Heart left ventricle (tissue), 16 donors: ENCODE measurements at regions of chr14 and their contacts with region 1.

Region 1: GRCh38 chr14:71932220-71932981 is at the start of gene RGS6:
- DNase-seq: peak in 4 of 5 donors; percentile 27 to 63 (median 40)
- ATAC-seq: peak; percentile 39 to 93 (median 81)
- H3K4me3 ChIP-seq: peak within 1 kb of the TSS; percentile 55 to 79 (median 68)
- H3K27ac ChIP-seq: peak within 1 kb of the TSS in 11 of 12 donors; percentile 43 to 81 (median 70)
- H3K4me1 ChIP-seq: peaks cover 0 to 21% (median 4%) of the 10 kb centered on the region in 12 donors
- H3K27me3 ChIP-seq: peaks cover 0 to 53% (median 4%) of the 10 kb centered on the region in 9 donors
- CTCF ChIP-seq: peak in 9 of 12 donors; percentile 5 to 57 (median 35)
- POLR2A ChIP-seq: no peak
- total RNA-seq, gene RGS6: 9.5 to 25.4 (median 18.8) TPM

Region 2: GRCh38 chr14:71231521-71232393 is 700.6 kb before region 1 on chr14:
- intact Hi-C with region 1: no loop called
- DNase-seq: no peak
- ATAC-seq: no peak
- H3K4me3 ChIP-seq: no peak overlapping the region
- H3K27ac ChIP-seq: no peak overlapping the region
- H3K4me1 ChIP-seq: peaks cover 0 to 13% (median 5%) of the 10 kb centered on the region in 12 donors
- H3K27me3 ChIP-seq: no peaks in the 10 kb centered on the region
- CTCF ChIP-seq: no peak
- POLR2A ChIP-seq: no peak

Region 3: DNA sequence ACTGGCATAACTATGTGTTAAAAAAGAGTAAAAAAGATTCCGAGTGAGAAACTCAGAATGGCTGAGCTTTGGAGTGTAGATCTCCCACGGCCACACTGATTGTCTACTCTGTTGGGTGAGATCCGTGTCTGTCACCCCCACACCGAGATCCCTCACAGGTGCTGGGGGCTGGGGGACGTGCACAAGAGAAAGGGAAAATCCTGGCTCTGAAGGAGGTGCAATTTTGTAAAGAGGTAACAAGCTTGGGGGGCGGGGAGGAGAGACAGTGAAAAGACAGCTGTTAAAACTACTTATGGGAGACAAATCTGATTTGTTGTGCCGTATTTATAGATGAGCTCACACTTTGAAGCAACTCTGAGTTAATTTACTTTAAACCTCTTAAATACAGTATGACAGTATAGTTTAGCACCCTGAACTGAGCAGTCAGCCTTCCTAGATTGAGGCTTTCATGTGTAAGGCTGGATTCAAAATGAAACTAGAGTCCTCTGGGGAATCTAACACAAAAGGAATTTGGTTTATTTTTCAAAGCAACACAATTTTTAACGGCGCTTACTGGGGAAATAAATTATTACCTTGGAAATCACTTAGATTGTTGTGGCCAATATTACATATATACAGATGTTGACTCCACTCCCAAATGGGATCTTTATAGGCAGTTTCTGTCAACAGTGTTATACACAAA is 167.6 kb before region 1 on chr14:
- intact Hi-C with region 1: no loop called
- DNase-seq: no peak
- ATAC-seq: no peak
- H3K4me3 ChIP-seq: no peak overlapping the region
- H3K27ac ChIP-seq: no peak overlapping the region
- H3K4me1 ChIP-seq: peaks cover 0 to 3% (median 0%) of the 10 kb centered on the region in 12 donors
- H3K27me3 ChIP-seq: peaks cover 0 to 3% (median 0%) of the 10 kb centered on the region in 9 donors
- CTCF ChIP-seq: no peak
- POLR2A ChIP-seq: no peak

Region 4: DNA sequence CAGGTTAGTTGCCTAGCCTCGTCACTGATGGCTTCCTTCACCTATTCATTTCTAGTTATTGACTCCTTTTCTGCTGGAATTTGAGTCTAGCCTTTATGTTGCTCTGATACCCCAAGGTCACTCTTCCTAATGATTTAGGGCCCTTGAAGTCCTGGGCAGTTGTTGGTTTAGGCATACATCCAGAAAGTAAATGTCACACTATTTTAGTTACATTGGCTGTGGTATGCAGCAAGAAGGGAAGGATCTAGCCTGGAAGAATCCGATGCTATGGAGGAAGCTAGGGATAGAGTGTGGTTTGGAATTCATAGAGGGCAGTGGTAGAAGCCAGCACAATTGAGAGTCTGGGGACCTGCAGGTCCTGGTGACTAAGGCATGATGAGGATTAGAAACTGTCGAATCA is 37.9 kb after region 1 on chr14:
- intact Hi-C with region 1: loop called in 1 of 10 experiments (anchors 5 kb)
- DNase-seq: no peak
- ATAC-seq: peak in 2 of 4 donors; percentile 67 to 80
- H3K4me3 ChIP-seq: no peak overlapping the region
- H3K27ac ChIP-seq: peak overlapping the region in 9 of 12 donors; percentile 2 to 59 (median 23)
- H3K4me1 ChIP-seq: peaks cover 0 to 32% (median 8%) of the 10 kb centered on the region in 12 donors
- H3K27me3 ChIP-seq: no peaks in the 10 kb centered on the region
- CTCF ChIP-seq: no peak
- POLR2A ChIP-seq: no peak

Region 5: DNA sequence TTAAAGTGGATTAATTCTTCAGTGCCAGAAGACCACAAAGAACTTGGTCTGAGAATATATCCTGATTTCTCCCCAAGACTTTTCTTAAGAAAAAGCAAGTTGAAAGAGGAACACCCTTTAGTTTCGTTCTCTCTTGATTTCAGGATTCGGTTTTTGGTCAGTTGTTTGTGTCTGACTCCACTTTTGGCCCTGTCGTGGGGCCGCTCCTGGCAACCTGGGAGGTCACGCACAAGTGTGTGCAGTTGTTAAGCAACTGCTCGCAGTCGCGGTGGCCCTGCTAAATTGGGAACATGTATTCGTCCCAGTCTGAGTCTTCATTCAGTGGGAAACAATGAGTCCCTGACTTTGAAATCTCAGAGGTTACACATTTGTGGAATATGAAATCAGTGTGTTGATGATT is 68.5 kb after region 1 on chr14:
- intact Hi-C with region 1: loop called in 3 of 10 experiments (anchors 5 to 10 kb)
- DNase-seq: peak; percentile 35 to 84 (median 67)
- ATAC-seq: peak; percentile 79 to 95 (median 90)
- H3K4me3 ChIP-seq: peak overlapping the region in 2 of 12 donors; percentile 13 to 32
- H3K27ac ChIP-seq: peak overlapping the region in 9 of 12 donors; percentile 10 to 77 (median 57)
- H3K4me1 ChIP-seq: peaks cover 0 to 29% (median 5%) of the 10 kb centered on the region in 12 donors
- H3K27me3 ChIP-seq: no peaks in the 10 kb centered on the region
- CTCF ChIP-seq: no peak
- POLR2A ChIP-seq: no peak

Region 6: GRCh38 chr14:72154723-72155633 is 222.6 kb after region 1 on chr14:
- intact Hi-C with region 1: no loop called
- DNase-seq: no peak
- ATAC-seq: peak in 2 of 4 donors; percentile 34 to 36
- H3K4me3 ChIP-seq: no peak overlapping the region
- H3K27ac ChIP-seq: no peak overlapping the region
- H3K4me1 ChIP-seq: peaks cover 0 to 21% (median 6%) of the 10 kb centered on the region in 12 donors
- H3K27me3 ChIP-seq: no peaks in the 10 kb centered on the region
- CTCF ChIP-seq: no peak
- POLR2A ChIP-seq: no peak

Region 7: GRCh38 chr14:72178517-72178916 is 246.1 kb after region 1 on chr14:
- intact Hi-C with region 1: loop called in 2 of 10 experiments (anchors 10 kb)
- DNase-seq: no peak
- ATAC-seq: no peak
- H3K4me3 ChIP-seq: no peak overlapping the region
- H3K27ac ChIP-seq: no peak overlapping the region
- H3K4me1 ChIP-seq: peaks cover 0 to 8% (median 0%) of the 10 kb centered on the region in 12 donors
- H3K27me3 ChIP-seq: no peaks in the 10 kb centered on the region
- CTCF ChIP-seq: no peak
- POLR2A ChIP-seq: no peak

Region 8: DNA sequence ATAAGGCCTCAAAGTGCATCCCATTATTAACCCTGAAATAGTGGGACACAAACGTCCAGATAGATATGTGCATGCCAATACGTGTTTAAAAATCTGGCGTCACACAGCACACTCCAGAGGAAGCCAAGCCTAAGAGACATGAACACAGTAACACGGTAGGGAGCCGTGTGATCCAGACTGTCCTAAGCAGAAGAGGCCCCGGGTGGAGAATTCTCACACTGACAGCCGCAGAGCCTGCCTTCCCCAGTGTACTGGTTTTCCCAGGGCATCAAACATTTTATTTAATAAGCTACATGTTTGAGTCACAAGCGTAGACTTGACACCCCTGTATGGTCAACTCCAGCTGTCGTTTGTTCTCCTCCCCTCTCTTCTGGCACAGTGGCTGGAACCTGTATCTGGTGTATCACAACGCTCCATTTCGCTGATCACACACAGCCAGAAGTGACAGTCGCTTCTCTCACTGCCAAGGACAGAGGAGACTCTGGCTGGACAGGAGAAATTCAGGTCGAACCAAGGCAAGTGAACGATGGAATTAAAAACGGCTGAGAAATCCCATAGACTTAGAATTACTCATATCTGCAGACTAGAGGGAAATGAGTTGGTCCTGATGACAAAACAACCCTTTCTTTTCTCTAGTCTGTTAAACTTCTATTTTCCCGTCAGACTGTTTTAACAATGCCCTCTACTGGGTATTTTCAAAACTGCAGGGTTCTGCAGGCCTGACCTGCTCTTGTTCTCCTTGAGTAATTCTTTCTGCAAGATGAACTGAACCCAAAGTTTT is 359.7 kb after region 1 on chr14:
- intact Hi-C with region 1: loop called (anchors 1 to 5 kb)
- DNase-seq: peak in 4 of 5 donors; percentile 16 to 33 (median 23)
- ATAC-seq: peak; percentile 71 to 87 (median 82)
- H3K4me3 ChIP-seq: peak overlapping the region in 8 of 12 donors; percentile 8 to 51 (median 28)
- H3K27ac ChIP-seq: peak overlapping the region in 2 of 12 donors; percentile 6 to 28
- H3K4me1 ChIP-seq: peaks cover 0 to 8% (median 0%) of the 10 kb centered on the region in 12 donors
- H3K27me3 ChIP-seq: peaks cover 0 to 3% (median 0%) of the 10 kb centered on the region in 9 donors
- CTCF ChIP-seq: peak; percentile 66 to 85 (median 80)
- POLR2A ChIP-seq: no peak